ENCODE measurements at regions of chr16 and their contacts with region 1.

Region 1: GRCh38 chr16:87778830-87779579 is 13.2 kb upstream of the KLHDC4 start:
- DNase-seq: peak; percentile 85 to 97
- H3K4me3 ChIP-seq: no peak overlapping the region
- CTCF ChIP-seq: peak in 1 of 3 donors; percentile 88
- POLR2A ChIP-seq: no peak

Region 2: GRCh38 chr16:87874639-87875465 is 95.8 kb after region 1 on chr16:
- intact Hi-C with region 1: loop called (anchors 5 kb)
- DNase-seq: no peak
- H3K4me3 ChIP-seq: no peak overlapping the region
- CTCF ChIP-seq: no peak
- POLR2A ChIP-seq: no peak

Region 3: DNA sequence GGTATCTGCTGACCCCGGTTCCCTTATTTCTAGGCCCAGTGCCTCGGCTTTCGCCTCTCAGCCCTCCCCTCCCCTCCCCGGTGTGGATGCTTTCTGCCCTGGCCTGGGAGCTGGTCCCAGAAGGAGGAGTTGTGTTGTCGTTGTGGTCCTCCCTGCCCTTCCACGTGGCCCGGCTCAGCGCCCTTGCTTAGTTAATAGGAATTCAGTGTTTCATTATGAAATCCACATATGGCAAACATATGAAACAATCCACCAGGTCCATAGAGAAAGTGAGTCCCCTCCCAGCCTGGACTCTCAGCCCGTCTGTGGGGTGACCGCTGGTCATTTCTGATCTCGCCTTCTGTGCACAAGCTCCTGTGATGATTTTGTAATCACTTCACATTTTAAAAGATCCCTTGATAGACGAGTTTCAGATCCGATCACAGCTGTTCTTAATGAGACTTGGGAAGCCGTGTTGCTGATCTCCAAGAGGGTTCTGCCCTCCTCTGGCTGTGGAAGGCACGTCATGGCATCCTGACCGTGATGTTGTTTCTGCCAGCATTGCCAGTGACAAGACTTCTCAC is 284.3 kb after region 1 on chr16:
- intact Hi-C with region 1: no loop called
- DNase-seq: peak; percentile 49 to 93
- H3K4me3 ChIP-seq: no peak overlapping the region
- CTCF ChIP-seq: no peak
- POLR2A ChIP-seq: no peak

Measured in lower leg skin (tissue), 4 donors.